ENCODE measurements at regions of chr4 and their contacts with region 1.

Region 1: GRCh38 chr4:2934813-2935761 is 28.1 kb downstream of the NOP14 start:
- DNase-seq: peak; percentile 93 to 97 (median 96)
- H3K4me3 ChIP-seq: peak overlapping the region; percentile 91
- H3K4me3 Mint-ChIP-seq: peak overlapping the region; percentile 88 to 99 (median 90)
- H3K27ac ChIP-seq: peak overlapping the region; percentile 96
- H3K27ac Mint-ChIP-seq: peak overlapping the region; percentile 86 to 100 (median 96)
- H3K4me1 ChIP-seq: peaks cover 55% of the 10 kb centered on the region
- H3K4me1 Mint-ChIP-seq: peaks cover 46 to 66% (median 59%) of the 10 kb centered on the region in 3 donors
- H3K27me3 ChIP-seq: no peaks in the 10 kb centered on the region
- H3K27me3 Mint-ChIP-seq: no peaks in the 10 kb centered on the region

Region 2: DNA sequence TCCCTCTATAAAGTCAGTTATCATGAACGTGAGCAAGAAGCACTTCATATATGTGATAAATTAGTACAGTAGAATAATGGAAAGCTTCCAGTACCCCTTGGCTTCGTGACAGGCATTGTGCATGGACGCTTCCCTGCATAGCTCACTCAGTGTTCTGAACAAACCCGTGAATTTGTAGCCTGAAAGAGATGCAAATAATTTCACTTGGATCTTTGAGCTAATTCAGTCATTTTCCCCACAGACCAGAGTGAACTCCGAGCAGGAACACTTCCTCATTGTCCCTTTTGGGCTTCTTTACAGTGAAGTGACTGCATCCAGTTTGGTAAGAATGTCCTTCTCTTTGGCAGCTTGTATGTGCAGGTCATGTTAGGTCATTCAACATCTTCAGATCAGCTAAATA is 41.3 kb before region 1 on chr4:
- CTCF ChIA-PET with region 1: no interaction called
- POLR2A ChIA-PET with region 1: no interaction called
- DNase-seq: no peak
- H3K4me3 ChIP-seq: no peak overlapping the region
- H3K4me3 Mint-ChIP-seq: no peak overlapping the region
- H3K27ac ChIP-seq: no peak overlapping the region
- H3K27ac Mint-ChIP-seq: peak overlapping the region in 4 of 8 donors; percentile 0 to 60 (median 32)
- H3K4me1 ChIP-seq: no peaks in the 10 kb centered on the region
- H3K4me1 Mint-ChIP-seq: peaks cover 0 to 14% (median 3%) of the 10 kb centered on the region in 3 donors
- H3K27me3 ChIP-seq: no peaks in the 10 kb centered on the region
- H3K27me3 Mint-ChIP-seq: peaks cover 0 to 1% of the 10 kb centered on the region in 2 donors

Region 3: DNA sequence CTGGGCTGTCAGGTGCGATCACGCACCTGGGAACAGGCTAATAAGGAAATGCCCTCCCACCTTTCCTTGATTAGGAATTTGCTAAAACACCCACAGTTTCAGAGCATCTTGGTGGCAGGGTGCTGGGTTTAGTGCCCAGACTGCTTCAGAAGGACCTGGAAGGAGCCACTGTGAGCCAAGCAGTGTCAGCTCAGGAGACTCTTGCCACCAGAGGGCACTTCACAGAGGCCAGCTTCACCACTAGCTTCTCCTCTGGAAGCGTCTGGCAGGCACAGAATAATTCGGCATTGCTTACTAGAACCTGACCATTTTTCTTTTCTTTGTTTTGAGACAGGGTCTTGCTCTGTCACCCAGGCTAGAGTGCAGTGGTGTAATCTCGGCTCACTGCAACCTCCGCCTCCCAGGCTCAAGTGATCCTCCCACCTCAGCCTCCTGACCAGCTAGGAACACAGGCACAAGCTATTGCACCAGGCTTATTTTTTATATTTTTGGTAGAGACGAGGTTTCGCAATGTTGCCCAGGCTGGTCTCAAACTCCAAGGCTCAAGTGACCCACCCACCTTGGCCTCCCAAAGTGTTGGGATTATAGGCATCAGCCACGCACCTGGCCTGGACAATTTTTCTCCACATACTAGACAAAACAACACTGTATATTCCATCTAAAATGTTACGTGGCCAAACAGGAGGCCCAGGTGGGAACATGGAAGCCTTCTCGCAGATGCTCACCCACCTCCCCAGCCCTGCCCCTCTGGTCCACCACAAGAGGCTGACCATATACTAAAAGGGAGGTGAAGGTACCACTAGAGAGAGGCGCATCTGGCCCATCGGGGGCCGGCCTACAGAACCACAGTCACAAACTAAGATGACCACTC is 14.0 kb after region 1 on chr4:
- CTCF ChIA-PET with region 1: interaction called, 14 read pairs
- POLR2A ChIA-PET with region 1: interaction called, 6 read pairs
- DNase-seq: peak in 1 of 5 donors; percentile 49
- H3K4me3 ChIP-seq: no peak overlapping the region
- H3K4me3 Mint-ChIP-seq: no peak overlapping the region
- H3K27ac ChIP-seq: no peak overlapping the region
- H3K27ac Mint-ChIP-seq: peak overlapping the region in 3 of 8 donors; percentile 17 to 74 (median 66)
- H3K4me1 ChIP-seq: no peaks in the 10 kb centered on the region
- H3K4me1 Mint-ChIP-seq: peaks cover 3 to 4% (median 3%) of the 10 kb centered on the region in 3 donors
- H3K27me3 ChIP-seq: no peaks in the 10 kb centered on the region
- H3K27me3 Mint-ChIP-seq: peaks cover 0 to 2% of the 10 kb centered on the region in 2 donors

Region 4: GRCh38 chr4:2954358-2955185 is 19.5 kb after region 1 on chr4:
- CTCF ChIA-PET with region 1: interaction called, 14 read pairs
- POLR2A ChIA-PET with region 1: interaction called, 3 read pairs
- DNase-seq: peak in 4 of 5 donors; percentile 43 to 68 (median 51)
- H3K4me3 ChIP-seq: no peak overlapping the region
- H3K4me3 Mint-ChIP-seq: peak overlapping the region in 3 of 7 donors; percentile 4 to 28 (median 23)
- H3K27ac ChIP-seq: no peak overlapping the region
- H3K27ac Mint-ChIP-seq: peak overlapping the region; percentile 85 to 96 (median 92)
- H3K4me1 ChIP-seq: peaks cover 5% of the 10 kb centered on the region
- H3K4me1 Mint-ChIP-seq: peaks cover 23 to 46% (median 45%) of the 10 kb centered on the region in 3 donors
- H3K27me3 ChIP-seq: no peaks in the 10 kb centered on the region
- H3K27me3 Mint-ChIP-seq: no peaks in the 10 kb centered on the region

Region 5: DNA sequence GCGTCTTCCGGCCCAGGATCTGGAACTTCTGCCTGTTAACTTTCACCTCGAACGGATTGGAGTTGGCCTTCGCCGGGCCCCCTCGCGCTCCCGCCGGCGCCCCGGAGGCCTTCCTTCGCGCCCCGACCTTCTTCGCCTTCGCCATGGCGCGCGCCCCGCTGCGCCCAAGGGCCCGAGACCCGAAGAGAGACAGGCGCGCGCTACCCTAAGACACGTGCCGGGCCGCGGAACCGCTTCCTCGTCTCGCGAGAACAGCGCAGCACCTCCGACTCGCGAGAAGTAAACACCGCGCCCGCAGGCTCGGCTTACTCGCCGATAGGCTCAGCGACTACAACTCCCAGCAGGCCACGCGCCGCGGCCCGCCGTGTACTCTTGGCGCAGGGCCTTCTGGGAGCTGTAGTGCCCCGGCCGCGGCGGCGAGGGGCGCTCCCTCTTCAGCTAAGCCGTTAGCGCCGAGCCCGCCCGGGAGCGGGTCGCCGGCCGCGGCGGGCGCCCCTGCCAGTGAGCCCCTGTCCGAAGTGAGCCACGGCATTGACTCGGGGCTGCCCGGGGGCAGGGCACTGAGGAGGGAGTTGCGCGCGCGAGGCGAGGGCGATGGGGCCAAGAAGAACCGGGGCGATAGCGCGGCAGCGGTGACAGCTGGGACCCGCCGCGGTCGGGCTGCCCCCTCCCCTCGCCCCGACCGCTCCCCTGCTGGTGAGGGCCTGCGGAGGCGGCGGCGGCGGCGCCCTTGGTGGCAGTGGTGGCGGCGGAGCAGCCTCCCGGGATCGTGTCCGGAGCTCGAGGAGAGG is 28.3 kb after region 1 on chr4 and contains the starts of genes GRK4 and NOP14:
- CTCF ChIA-PET with region 1: interaction called, 5 read pairs
- POLR2A ChIA-PET with region 1: interaction called, 17 read pairs
- DNase-seq: peak; percentile 96 to 99 (median 97)
- H3K4me3 ChIP-seq: peak within 1 kb of the TSS; percentile 70
- H3K4me3 Mint-ChIP-seq: peak within 1 kb of the TSS; percentile 84 to 95 (median 89)
- H3K27ac ChIP-seq: peak within 1 kb of the TSS; percentile 53
- H3K27ac Mint-ChIP-seq: peak within 1 kb of the TSS; percentile 65 to 96 (median 91)
- H3K4me1 ChIP-seq: peaks cover 27% of the 10 kb centered on the region
- H3K4me1 Mint-ChIP-seq: peaks cover 28 to 44% (median 38%) of the 10 kb centered on the region in 3 donors
- H3K27me3 ChIP-seq: no peaks in the 10 kb centered on the region
- H3K27me3 Mint-ChIP-seq: no peaks in the 10 kb centered on the region
- total RNA-seq, gene GRK4: 5.4 to 7.7 TPM
- total RNA-seq, gene NOP14: 156 to 165 TPM

Measured in CD8-positive, alpha-beta memory T cell (primary cell).